Mammary epithelial cell (primary cell): ENCODE measurements at regions of chr1 and their contacts with region 1.

Region 1: DNA sequence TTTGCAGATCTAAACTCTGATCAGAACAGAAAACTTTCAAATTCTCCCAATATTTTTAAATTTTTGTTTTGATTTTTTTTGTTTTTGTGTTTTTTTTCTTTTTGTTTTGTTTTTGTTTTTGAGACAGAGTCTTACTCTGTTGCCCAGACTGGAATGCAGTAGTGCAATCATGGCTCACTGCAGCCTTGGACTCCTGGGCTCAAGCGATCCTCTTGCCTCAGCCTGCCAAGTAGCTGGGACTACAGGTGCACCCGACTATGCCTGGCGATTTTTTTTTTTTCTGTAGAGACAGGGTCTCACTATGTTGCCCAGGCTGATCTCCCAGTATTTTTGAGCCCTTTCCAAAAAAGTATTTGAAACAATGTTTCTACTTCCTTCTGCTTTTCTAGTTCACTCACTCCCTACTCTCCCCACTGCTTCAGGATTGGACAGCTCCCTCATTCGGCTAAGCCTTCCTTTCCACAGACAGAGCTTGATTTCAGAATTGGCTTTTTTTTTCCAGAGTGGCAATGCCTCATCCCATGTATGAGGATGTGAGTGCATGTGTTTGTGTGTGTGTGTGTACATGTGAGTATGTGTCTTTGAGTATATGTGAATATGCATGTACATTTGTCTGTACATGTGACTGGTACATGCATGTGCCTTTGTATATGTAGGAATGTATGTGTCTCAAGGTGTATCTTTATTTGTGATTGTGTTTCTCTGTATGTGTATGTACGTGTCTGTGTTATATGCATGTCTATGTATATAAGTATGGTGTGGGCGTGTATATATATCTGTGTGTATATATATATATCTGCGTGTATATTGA is 11.9 kb downstream of the LHX4 start:
- DNase-seq: peak; percentile 12
- H3K4me3 ChIP-seq: no peak overlapping the region
- H3K27ac ChIP-seq: no peak overlapping the region
- H3K4me1 ChIP-seq: no peaks in the 10 kb centered on the region
- H3K27me3 ChIP-seq: peaks cover 23% of the 10 kb centered on the region
- CTCF ChIP-seq: no peak

Region 2: DNA sequence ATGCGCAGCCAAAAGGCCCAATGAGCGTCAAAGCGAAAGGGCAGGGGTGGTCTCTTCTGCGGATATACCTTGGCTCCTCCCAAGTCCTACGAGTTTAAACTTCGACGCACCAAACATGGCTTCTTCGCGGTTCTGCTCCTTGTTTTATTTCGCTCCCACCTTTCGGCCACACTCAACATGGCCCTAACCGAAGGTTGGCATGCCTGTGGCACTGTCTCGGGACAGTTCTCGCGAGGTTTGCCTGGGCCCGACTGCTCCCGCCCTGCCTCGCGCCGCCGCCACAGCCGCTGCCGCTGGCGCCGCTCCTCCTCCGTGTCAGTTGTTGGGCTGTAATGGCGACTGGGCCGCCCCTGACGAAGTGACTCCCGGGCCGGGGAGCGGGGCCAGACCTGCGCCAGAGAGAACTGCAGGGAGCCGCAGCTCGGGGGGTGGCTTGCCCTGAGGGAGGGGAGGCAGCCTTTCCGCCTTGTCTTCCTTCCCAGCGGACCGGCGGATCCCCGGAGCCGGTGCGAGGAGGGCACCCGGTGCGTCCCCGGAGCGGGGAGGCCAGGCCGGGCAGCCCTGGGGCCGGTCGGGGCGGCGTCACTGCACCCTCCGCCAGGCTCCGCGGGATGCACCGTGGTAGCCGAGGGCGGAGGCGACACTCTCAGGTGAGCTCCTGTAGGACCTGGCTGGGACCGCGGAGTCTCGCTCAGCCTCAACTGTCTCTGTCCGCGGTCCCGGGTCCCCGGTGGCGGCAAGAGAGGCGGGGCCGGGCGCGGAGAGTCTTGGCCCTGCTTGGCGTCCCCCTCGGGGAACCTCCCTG is 287.2 kb before region 1 on chr1 and contains the start of gene CEP350:
- CTCF ChIA-PET with region 1: no interaction called
- dilution Hi-C with region 1: no loop called
- in situ Hi-C with region 1: no loop called
- intact Hi-C with region 1: no loop called
- DNase-seq: peak; percentile 99
- H3K4me3 ChIP-seq: peak within 1 kb of the TSS; percentile 94 to 99 (median 96)
- H3K27ac ChIP-seq: peak within 1 kb of the TSS; percentile 81
- H3K4me1 ChIP-seq: peaks cover 12% of the 10 kb centered on the region
- H3K27me3 ChIP-seq: no peaks in the 10 kb centered on the region
- CTCF ChIP-seq: no peak
- total RNA-seq, gene CEP350: 29.6 to 37.5 TPM

Region 3: DNA sequence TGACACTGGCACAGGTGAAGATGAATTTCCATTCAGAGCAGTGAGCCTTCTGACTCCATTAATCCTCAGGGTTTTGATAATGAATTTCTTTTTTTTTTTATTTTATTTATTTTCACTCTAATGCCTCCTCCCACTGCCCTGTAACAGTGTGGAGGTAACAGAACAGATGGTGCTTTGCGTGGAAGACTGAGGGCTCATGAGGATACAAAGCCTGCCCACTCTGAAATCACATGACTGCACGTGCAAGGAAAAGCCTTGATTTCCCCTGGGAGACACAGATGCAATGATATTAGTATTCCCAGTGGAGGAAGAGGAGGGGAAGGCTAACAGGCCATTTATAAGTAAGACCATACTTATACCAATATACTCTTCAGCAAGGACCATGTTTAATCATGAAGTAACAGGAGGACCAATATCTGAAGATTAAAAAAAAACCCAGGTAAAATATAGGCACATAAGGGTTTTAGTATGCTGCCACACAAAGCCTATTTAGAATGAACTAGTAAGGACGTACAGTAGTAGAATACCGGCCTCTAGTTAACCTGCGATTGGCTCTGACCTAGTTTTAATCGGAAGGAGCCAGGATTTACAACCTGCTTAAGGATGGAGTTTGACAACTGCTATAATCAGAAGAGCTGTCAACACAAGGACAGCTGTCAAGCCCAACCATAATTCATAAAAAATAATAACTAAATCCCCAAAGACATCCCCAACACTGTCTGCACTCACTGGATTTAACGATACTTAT is 57.7 kb after region 1 on chr1:
- CTCF ChIA-PET with region 1: no interaction called
- dilution Hi-C with region 1: loop called (anchors 5 kb)
- in situ Hi-C with region 1: no loop called
- intact Hi-C with region 1: no loop called
- DNase-seq: no peak
- H3K4me3 ChIP-seq: no peak overlapping the region
- H3K27ac ChIP-seq: no peak overlapping the region
- H3K4me1 ChIP-seq: no peaks in the 10 kb centered on the region
- H3K27me3 ChIP-seq: no peaks in the 10 kb centered on the region
- CTCF ChIP-seq: no peak

Region 4: DNA sequence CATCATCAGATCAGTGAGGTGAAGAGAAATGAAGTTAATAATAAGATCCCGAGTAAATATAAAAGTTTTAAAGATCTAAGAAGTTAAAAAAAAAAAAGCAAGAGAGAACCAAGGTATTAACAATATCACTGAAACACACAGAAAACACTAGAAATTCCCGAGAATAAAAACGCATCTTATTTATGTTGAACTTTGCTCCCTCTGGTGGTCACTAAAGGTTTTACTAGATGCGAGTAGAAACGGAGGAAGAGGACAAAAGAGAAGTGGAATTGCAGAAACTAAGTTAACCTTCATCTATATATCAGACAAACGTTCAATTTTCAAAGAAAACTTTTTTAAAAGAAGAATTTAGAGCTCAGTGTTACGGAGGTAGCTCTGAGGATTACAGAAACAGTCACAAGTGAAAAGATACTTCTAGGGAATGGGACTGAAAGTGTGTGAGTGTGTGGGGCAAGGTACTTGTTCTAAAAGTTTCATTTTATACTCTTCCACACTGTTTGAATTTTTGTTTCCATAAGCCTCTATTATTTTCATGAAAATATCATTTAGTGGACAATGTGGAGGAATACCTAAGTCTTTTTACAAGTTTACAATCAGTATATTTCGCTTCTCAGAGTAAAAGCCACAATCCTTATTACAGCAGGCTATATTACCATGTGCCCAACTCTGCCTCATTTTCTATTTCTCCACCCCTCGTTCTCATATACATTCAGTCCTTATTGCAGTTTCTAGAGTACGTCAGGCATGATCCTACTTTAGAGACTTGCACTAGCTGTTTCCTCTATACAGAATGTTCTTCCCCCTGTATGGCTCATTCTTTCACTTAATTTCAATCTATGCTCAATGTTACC is 240.7 kb after region 1 on chr1:
- CTCF ChIA-PET with region 1: no interaction called
- dilution Hi-C with region 1: no loop called
- in situ Hi-C with region 1: loop called in 1 of 2 experiments (anchors 5 kb)
- intact Hi-C with region 1: no loop called
- DNase-seq: peak; percentile 41
- H3K4me3 ChIP-seq: peak overlapping the region in 1 of 3 experiments; percentile 22
- H3K27ac ChIP-seq: no peak overlapping the region
- H3K4me1 ChIP-seq: no peaks in the 10 kb centered on the region
- H3K27me3 ChIP-seq: no peaks in the 10 kb centered on the region
- CTCF ChIP-seq: peak; percentile 64 to 80